Naive thymus-derived CD4-positive, alpha-beta T cell (primary cell): ENCODE measurements at regions of chr14 and their contacts with region 1.

Region 1: GRCh38 chr14:66070509-66071319 is 415.5 kb upstream of the CCDC196 start:
- DNase-seq: peak; percentile 41 to 76 (median 62)
- ATAC-seq: peak; percentile 91
- H3K4me3 ChIP-seq: no peak overlapping the region
- H3K4me3 Mint-ChIP-seq: no peak overlapping the region
- H3K27ac ChIP-seq: no peak overlapping the region
- H3K27ac Mint-ChIP-seq: peak overlapping the region in 1 of 9 donors; percentile 28
- H3K4me1 ChIP-seq: no peaks in the 10 kb centered on the region
- H3K4me1 Mint-ChIP-seq: peaks cover 4 to 12% (median 8%) of the 10 kb centered on the region in 7 donors
- H3K27me3 ChIP-seq: no peaks in the 10 kb centered on the region
- H3K27me3 Mint-ChIP-seq: peaks cover 0 to 20% (median 6%) of the 10 kb centered on the region in 5 donors

Region 2: DNA sequence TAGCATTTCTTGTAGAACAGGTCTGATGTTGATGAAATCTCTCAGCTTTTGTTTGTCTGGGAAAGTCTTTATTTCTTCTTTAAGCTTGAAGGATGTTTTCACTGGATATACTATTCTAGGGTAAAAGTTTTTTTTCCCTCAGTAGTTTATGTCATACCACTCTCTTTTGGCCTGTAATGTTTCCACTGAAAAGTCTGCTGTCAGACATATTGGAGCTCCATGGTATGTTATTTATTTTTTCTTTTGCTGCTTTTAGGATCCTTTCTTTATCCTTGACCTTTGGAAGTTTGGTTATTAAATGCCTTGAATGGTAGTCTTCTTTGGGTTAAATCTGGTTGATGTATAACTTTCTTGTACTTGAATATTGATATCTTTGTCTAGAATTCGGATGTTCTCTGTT is 352.1 kb before region 1 on chr14:
- CTCF ChIA-PET with region 1: no interaction called
- POLR2A ChIA-PET with region 1: no interaction called
- intact Hi-C with region 1: loop called in 1 of 2 experiments (anchors 1 kb)
- DNase-seq: no peak
- ATAC-seq: no peak
- H3K4me3 ChIP-seq: no peak overlapping the region
- H3K4me3 Mint-ChIP-seq: no peak overlapping the region
- H3K27ac ChIP-seq: no peak overlapping the region
- H3K27ac Mint-ChIP-seq: no peak overlapping the region
- H3K4me1 ChIP-seq: peaks cover 0 to 4% of the 10 kb centered on the region in 2 donors
- H3K4me1 Mint-ChIP-seq: peaks cover 9 to 47% (median 38%) of the 10 kb centered on the region in 7 donors
- H3K27me3 ChIP-seq: no peaks in the 10 kb centered on the region
- H3K27me3 Mint-ChIP-seq: no peaks in the 10 kb centered on the region

Region 3: DNA sequence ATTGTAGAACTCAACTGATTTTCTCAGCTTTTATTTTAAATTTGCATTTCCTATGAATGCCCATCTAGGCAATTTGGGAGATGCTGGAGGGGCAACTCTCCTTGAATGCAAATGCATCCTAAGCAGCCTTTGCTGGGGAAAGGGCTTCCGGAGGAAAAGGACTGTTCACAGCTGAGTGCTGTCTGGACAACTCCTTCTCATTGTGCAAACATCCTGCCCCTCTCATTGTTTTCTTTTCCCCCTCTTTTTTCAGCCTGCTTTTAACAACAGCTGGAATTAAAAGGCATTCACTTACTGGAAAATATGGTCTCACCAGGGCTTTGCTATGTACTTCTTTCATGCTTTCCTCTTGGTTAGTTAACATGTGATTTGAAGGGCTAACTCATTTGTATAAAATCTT is 260.4 kb before region 1 on chr14:
- CTCF ChIA-PET with region 1: interaction called, 36 read pairs
- POLR2A ChIA-PET with region 1: no interaction called
- intact Hi-C with region 1: loop called in 1 of 2 experiments (anchors 1 kb)
- DNase-seq: no peak
- ATAC-seq: no peak
- H3K4me3 ChIP-seq: no peak overlapping the region
- H3K4me3 Mint-ChIP-seq: no peak overlapping the region
- H3K27ac ChIP-seq: no peak overlapping the region
- H3K27ac Mint-ChIP-seq: no peak overlapping the region
- H3K4me1 ChIP-seq: no peaks in the 10 kb centered on the region
- H3K4me1 Mint-ChIP-seq: peaks cover 0 to 7% (median 5%) of the 10 kb centered on the region in 7 donors
- H3K27me3 ChIP-seq: no peaks in the 10 kb centered on the region
- H3K27me3 Mint-ChIP-seq: peaks cover 0 to 17% (median 0%) of the 10 kb centered on the region in 5 donors

Region 4: DNA sequence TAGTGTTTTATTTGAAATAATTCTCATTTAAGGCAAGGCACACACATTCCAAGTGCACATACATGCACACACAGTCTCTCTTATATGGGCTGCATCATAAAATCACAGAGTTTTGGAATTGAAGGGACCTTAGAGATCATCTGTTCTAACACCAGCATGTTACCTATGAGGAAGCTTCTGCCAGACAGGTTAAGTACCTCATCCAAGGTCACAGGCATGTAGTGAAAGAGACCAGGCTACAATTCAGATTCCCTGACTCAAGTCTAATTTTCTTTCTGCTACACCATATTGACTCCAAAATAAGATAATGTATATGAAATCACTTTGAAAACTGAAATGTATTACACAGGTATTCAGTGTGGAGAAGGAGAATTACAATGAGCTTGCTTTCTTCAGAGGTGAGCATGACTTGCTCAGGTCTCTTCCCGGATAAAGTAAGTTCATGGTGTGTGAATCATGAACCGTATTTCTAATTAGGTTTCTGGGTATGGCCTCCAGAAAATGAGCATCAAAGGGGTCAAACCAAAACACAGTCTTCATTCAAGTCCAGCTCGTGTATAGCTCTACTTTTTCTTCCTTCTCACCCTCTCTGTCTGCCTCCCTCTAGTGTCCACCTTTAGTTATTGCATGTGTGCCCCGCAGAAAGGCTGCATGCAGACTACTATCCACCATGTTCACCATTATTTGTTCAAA is 246.3 kb before region 1 on chr14:
- CTCF ChIA-PET with region 1: interaction called, 10 read pairs
- POLR2A ChIA-PET with region 1: no interaction called
- intact Hi-C with region 1: loop called (anchors 2 kb)
- DNase-seq: peak in 8 of 9 donors; percentile 38 to 71 (median 60)
- ATAC-seq: peak; percentile 93
- H3K4me3 ChIP-seq: no peak overlapping the region
- H3K4me3 Mint-ChIP-seq: peak overlapping the region in 1 of 10 donors; percentile 39
- H3K27ac ChIP-seq: no peak overlapping the region
- H3K27ac Mint-ChIP-seq: peak overlapping the region in 3 of 9 donors; percentile 0 to 66 (median 66)
- H3K4me1 ChIP-seq: peaks cover 6 to 8% of the 10 kb centered on the region in 2 donors
- H3K4me1 Mint-ChIP-seq: peaks cover 3 to 33% (median 14%) of the 10 kb centered on the region in 7 donors
- H3K27me3 ChIP-seq: no peaks in the 10 kb centered on the region
- H3K27me3 Mint-ChIP-seq: peaks cover 0 to 7% (median 0%) of the 10 kb centered on the region in 5 donors

Region 5: DNA sequence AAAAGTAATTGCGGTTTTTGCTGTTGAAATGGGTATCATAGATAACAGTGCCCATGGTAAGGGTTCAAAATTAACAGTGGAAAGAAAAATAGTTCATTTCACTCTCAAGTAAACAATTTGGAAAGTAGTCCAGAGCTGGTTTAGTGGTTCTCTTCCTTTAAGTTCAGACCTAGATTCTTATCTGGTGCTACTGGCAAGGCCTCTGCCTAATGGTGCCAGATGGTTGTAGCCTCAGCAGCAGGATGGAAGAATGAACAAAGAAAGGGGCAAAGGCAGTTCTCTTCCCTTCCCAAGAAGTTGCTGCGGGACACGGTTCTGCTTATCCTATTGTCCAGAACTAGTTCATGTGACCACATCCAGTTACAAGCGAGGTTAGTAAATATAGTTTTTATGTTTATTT is 1559.5 kb after region 1 on chr14:
- CTCF ChIA-PET with region 1: no interaction called
- POLR2A ChIA-PET with region 1: no interaction called
- intact Hi-C with region 1: no loop called
- DNase-seq: no peak
- ATAC-seq: no peak
- H3K4me3 ChIP-seq: no peak overlapping the region
- H3K4me3 Mint-ChIP-seq: no peak overlapping the region
- H3K27ac ChIP-seq: no peak overlapping the region
- H3K27ac Mint-ChIP-seq: no peak overlapping the region
- H3K4me1 ChIP-seq: no peaks in the 10 kb centered on the region
- H3K4me1 Mint-ChIP-seq: peaks cover 0 to 2% (median 0%) of the 10 kb centered on the region in 7 donors
- H3K27me3 ChIP-seq: no peaks in the 10 kb centered on the region
- H3K27me3 Mint-ChIP-seq: no peaks in the 10 kb centered on the region